Common myeloid progenitor, CD34-positive (primary cell): ENCODE measurements at regions of chr12 and their contacts with region 1.

Region 1: DNA sequence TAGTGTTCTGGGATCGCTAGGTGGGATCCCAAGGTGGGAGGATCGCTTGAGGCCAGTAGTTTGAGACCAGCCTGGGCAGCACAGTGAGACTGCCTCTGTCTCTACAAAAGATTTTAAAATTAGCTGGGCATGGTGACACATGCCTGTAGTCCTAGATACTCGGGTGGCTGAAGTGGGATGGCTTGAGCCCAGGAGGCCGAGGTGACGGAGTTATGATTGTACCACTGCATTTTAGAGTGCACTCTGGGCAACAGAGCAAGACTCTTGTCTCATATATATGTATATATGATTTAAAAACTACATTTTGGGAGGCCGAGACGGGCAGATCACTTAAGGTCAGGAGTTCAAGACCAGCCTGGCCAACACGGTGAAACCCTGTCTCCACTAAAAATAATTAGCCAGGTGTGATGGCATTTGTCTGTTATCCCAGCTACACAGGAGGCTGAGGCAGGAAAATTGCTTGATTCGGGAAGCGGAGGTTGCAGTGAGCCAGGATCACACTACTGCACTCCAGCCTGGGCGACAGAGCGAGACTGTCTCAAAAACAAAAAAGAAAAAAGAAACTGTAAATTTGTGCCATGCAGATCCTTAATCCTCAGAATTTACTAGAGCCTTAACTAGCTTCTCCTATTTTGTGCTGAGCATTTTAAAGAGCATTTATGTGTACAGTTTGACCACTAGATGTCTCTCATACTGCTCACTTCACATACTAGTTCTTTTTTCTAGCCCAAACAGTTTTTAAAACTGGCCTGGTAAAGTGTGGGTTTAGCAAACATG is 114.8 kb downstream of the MON2 start:
- DNase-seq: peak; percentile 77 to 86 (median 84)
- H3K4me3 ChIP-seq: no peak overlapping the region
- H3K27ac ChIP-seq: no peak overlapping the region
- H3K4me1 ChIP-seq: peaks cover 0 to 15% (median 11%) of the 10 kb centered on the region in 4 experiments
- H3K27me3 ChIP-seq: no peaks in the 10 kb centered on the region

Region 2: GRCh38 chr12:62793256-62794217 is 212.1 kb after region 1 on chr12:
- CTCF ChIA-PET with region 1: interaction called, 165 read pairs
- POLR2A ChIA-PET with region 1: no interaction called
- DNase-seq: peak; percentile 69 to 81 (median 74)
- H3K4me3 ChIP-seq: no peak overlapping the region
- H3K27ac ChIP-seq: peak overlapping the region in 1 of 2 experiments; percentile 1
- H3K4me1 ChIP-seq: peaks cover 0 to 2% (median 0%) of the 10 kb centered on the region in 4 experiments
- H3K27me3 ChIP-seq: no peaks in the 10 kb centered on the region